ENCODE measurements at regions of chr11 and their contacts with region 1.

Region 1: DNA sequence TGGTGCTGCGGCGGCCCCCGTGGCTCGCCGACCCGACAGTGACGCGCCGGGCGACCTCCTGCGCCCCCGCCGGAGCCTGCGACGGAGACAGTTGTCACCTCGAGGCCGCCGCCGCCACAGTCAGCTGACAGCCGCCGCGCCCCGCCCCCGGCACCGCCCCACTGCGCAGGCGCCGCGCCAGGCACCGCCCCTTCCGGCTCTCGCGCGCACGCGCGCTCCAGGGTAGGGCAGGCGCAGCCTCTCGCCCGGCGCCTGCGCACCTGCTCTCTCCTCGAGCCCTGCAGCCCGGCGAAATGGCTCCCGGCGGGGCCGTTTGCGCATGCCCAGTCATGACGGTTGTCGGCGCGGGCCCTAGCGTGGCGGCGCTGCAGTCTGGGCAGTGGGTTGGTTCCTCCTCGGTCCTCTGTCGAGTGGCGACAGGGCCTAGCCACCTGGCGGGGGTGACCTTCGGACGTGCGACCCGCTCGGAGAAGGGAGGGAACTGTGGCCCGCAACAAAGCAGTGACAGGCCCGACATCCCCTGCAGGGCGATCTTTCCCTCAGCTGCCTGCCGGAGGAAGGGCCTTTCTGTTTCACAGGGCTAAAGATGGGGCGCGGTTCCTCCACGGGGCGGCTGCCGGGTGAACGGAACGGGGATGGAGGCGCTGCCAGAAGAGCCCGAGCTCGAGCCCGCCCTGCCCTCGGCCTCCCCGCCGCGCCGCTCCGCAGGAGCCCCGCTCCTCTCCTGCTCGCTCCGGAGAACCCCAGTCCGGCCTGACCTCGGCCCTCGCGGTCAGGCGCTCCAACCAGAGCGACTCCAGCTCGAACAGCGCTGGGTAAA is at the start of gene TOLLIP:
- DNase-seq: peak; percentile 97
- H3K4me3 Mint-ChIP-seq: peak within 1 kb of the TSS; percentile 82
- H3K27ac Mint-ChIP-seq: peak within 1 kb of the TSS; percentile 89
- H3K4me1 Mint-ChIP-seq: peaks cover 19% of the 10 kb centered on the region
- H3K27me3 Mint-ChIP-seq: peaks cover 28% of the 10 kb centered on the region
- total RNA-seq, gene TOLLIP: 37.4 and 42.9 TPM in 2 replicates

Region 2: GRCh38 chr11:1262172-1263006 is 47.3 kb before region 1 on chr11:
- intact Hi-C with region 1: loop called (anchors 1 kb)
- DNase-seq: peak; percentile 70
- H3K4me3 Mint-ChIP-seq: peak overlapping the region; percentile 42
- H3K27ac Mint-ChIP-seq: peak overlapping the region; percentile 63
- H3K4me1 Mint-ChIP-seq: peaks cover 4% of the 10 kb centered on the region
- H3K27me3 Mint-ChIP-seq: no peaks in the 10 kb centered on the region

Region 3: DNA sequence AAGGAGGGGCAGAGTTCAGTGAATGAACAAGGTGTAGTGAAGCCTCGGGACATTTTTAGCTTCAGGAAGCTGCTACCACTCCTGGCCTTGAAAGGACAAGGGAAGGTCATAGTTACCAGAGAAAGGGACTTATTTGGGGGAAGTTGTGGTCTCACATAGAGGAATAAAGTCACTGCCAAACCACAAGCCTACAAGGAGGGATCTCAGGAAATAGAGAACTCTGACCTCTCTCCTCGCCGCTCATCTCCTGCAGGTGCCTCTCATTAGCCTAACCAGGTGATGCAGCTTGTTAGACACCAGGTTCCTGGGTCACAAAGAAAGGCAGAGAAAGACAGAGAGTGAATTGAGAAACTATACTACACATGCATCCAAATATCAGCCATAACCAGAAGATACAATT is 14.1 kb after region 1 on chr11:
- intact Hi-C with region 1: no loop called
- DNase-seq: no peak
- H3K4me3 Mint-ChIP-seq: no peak overlapping the region
- H3K27ac Mint-ChIP-seq: no peak overlapping the region
- H3K4me1 Mint-ChIP-seq: no peaks in the 10 kb centered on the region
- H3K27me3 Mint-ChIP-seq: peaks cover 8% of the 10 kb centered on the region

Region 4: GRCh38 chr11:1335811-1336761 is 26.4 kb after region 1 on chr11:
- intact Hi-C with region 1: loop called (anchors 1 kb)
- DNase-seq: peak; percentile 38
- H3K4me3 Mint-ChIP-seq: peak overlapping the region; percentile 77
- H3K27ac Mint-ChIP-seq: peak overlapping the region; percentile 59
- H3K4me1 Mint-ChIP-seq: peaks cover 8% of the 10 kb centered on the region
- H3K27me3 Mint-ChIP-seq: peaks cover 9% of the 10 kb centered on the region

Region 5: DNA sequence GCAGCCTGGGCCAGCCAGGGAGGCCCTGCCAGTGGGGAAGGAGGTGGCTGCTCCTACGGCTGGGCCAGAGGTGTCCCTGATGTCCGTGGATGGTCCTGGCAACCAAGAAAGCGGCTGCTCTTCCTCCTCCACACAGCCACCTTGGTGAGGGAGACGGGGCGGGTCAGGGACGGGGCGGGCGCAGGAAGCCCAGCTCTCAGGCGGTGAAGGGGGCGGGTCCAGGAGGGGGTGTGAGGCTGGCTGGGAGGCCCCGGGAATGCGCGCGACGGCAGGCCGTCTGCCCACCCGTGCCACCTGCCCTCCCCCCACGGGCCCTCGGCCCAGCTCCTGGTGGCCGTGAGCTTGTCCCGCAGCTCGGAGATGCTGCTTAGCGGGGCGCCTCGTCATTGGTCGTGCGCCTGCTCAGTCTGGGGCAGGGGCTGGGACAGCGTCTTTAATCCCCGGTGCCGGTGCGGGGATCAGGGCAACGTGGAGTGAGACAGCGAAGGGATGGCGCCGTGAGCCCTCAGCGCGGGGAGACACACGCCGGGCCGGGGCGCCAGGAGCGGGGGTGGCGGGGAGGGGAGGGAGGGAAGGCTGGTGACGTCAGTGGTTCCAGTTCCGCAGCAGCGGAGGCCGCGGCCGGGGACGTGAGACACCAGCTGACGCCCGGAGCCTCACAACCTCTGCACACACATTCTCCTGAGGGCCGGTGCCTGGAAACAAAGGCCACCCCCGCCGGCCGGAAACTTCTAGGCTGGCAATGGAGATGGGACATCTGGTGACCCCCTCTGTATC is 73.3 kb after region 1 on chr11:
- intact Hi-C with region 1: loop called (anchors 1 kb)
- DNase-seq: peak; percentile 55
- H3K4me3 Mint-ChIP-seq: peak overlapping the region; percentile 76
- H3K27ac Mint-ChIP-seq: peak overlapping the region; percentile 73
- H3K4me1 Mint-ChIP-seq: peaks cover 11% of the 10 kb centered on the region
- H3K27me3 Mint-ChIP-seq: peaks cover 31% of the 10 kb centered on the region

Region 6: GRCh38 chr11:1389103-1389931 is 79.6 kb after region 1 on chr11:
- intact Hi-C with region 1: loop called (anchors 1 kb)
- DNase-seq: peak; percentile 93
- H3K4me3 Mint-ChIP-seq: peak overlapping the region; percentile 30
- H3K27ac Mint-ChIP-seq: no peak overlapping the region
- H3K4me1 Mint-ChIP-seq: peaks cover 5% of the 10 kb centered on the region
- H3K27me3 Mint-ChIP-seq: peaks cover 33% of the 10 kb centered on the region

Region 7: GRCh38 chr11:1453611-1454034 is 143.9 kb after region 1 on chr11:
- intact Hi-C with region 1: no loop called
- DNase-seq: peak; percentile 28
- H3K4me3 Mint-ChIP-seq: no peak overlapping the region
- H3K27ac Mint-ChIP-seq: no peak overlapping the region
- H3K4me1 Mint-ChIP-seq: no peaks in the 10 kb centered on the region
- H3K27me3 Mint-ChIP-seq: no peaks in the 10 kb centered on the region

Region 8: GRCh38 chr11:1844221-1845094 is 534.8 kb after region 1 on chr11:
- intact Hi-C with region 1: no loop called
- DNase-seq: peak; percentile 24
- H3K4me3 Mint-ChIP-seq: peak overlapping the region; percentile 62
- H3K27ac Mint-ChIP-seq: peak overlapping the region; percentile 79
- H3K4me1 Mint-ChIP-seq: peaks cover 44% of the 10 kb centered on the region
- H3K27me3 Mint-ChIP-seq: peaks cover 2% of the 10 kb centered on the region

Measured in activated T-helper 1 cell treated with anti-CD3 and anti-CD28 coated beads, Interleukin-12 subunit alpha, Interleukin-12 subunit beta, Interleukin-2, Interleukin-4 antibody, amounts not matched to agents 30 ng/mL and 10 ng/mL and 1 ng/mL, durations not matched to agents 14 hours and 24 hours and 36 hours (primary cell).